Dorsolateral prefrontal cortex (tissue), 120 donors: ENCODE measurements at regions of chr1 and their contacts with region 1.

Region 1: DNA sequence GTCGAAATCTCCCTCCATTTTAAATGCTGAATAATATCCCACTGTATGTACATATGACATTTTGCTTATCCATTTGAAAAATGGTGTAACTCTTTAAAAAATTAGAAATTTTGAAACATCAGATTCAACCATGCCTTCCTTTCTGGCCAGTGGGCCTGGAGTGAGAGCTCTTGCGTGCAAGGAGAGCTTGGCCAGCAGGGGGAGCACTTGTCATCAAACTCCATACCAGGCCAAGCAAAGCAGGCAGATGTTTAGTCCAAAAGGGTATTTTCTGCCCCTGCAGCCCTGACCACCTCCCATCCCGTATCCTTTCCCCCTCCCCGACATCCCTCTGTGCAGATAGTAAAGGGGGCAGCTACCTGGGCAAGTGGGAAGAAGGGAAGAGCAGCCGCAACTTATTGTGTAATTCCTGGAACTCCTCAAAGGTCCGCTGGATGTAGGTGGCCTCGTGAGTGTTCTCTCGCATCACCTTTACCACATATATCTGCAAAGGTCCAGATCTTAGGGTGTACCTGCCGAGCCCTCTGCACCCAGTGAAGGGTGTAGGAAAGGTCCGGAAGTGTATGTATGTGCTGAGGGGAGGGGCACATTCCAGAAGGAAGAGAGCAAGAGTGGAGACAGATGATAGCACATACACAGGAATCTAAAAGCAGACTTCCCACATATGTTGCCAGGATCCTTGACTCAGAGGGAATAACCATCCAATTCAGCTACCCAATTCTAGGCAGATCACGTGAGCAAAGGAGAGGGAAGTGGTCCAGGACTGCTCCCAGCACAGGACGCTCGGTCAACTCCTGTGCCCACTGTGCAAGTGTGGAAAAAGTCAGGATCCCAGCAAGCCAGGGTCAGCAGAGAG is 19.9 kb upstream of the PPP1R15B start:
- DNase-seq: peak; percentile 76 to 88 (median 82)
- H3K4me3 ChIP-seq: no peak overlapping the region
- H3K27ac ChIP-seq: peak overlapping the region in 48 of 59 donors; percentile 2 to 79 (median 52)
- H3K27me3 ChIP-seq: no peaks in the 10 kb centered on the region
- CTCF ChIP-seq: peak; percentile 75 to 96 (median 92)

Region 2: DNA sequence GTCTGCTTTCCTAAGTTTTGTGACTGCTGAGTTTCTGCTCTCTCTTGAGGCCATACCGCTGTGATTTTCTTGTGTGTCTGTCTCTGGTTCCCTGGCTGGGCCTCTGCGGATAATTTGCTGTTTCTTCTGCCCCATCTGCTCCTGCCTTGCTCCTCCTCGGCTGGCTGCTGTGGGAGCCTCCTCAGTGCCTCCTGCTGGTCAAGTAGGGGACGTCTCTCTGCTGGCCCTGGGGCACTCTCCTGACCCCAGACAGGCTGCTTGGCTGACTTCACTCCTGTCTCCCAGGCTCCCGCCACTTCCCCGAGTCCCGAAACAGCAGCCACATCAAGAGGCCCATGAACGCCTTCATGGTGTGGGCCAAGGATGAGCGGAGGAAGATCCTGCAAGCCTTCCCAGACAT is 308.2 kb before region 1 on chr1:
- intact Hi-C with region 1: no loop called
- DNase-seq: no peak
- H3K4me3 ChIP-seq: no peak overlapping the region
- H3K27ac ChIP-seq: no peak overlapping the region
- H3K27me3 ChIP-seq: no peaks in the 10 kb centered on the region
- CTCF ChIP-seq: peak in 27 of 56 donors; percentile 13 to 40 (median 24)

Region 3: DNA sequence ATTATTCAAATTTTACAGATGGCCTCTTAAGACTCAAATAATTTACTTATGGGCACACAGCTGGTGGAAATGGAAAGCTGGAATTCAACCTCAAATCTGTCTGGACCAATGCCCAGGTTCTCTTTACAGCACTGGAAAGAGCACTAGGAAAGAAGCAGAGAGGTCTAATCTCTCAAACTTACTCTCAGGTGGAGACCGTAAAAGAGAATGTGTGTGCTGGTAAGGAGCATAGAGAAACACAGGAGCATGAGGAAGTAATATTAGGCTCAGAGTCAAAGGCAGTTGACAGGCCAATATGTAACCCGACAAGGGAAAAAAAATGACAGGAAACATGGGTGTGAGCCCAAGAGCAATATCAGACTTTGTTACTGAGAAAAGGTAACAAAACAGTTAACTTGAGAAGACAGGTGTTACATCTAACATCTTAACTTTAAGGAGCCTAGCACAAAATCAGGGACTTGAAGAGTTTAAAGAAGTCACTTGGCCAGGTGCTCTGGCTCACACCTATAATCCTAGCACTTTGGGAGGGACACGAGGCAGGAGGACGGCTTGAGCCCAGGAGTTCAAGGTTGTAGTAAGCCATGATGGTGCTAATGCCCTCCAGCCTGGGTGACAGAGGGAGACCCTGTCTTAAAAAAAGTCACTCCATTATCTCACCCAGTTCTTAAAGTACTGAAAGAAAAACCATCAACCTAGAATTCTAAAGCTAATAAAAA is 40.6 kb before region 1 on chr1:
- intact Hi-C with region 1: no loop called
- DNase-seq: no peak
- H3K4me3 ChIP-seq: no peak overlapping the region
- H3K27ac ChIP-seq: no peak overlapping the region
- H3K27me3 ChIP-seq: no peaks in the 10 kb centered on the region
- CTCF ChIP-seq: no peak

Region 4: GRCh38 chr1:204506961-204507387 is 75.4 kb after region 1 on chr1:
- intact Hi-C with region 1: loop called in 1 of 2 experiments (anchors 2 kb)
- DNase-seq: peak in 8 of 10 donors; percentile 66 to 87 (median 79)
- H3K4me3 ChIP-seq: peak overlapping the region; percentile 51 to 96 (median 73)
- H3K27ac ChIP-seq: peak overlapping the region; percentile 66 to 100 (median 96)
- H3K27me3 ChIP-seq: no peaks in the 10 kb centered on the region
- CTCF ChIP-seq: peak in 5 of 56 donors; percentile 6 to 24 (median 13)

Region 5: DNA sequence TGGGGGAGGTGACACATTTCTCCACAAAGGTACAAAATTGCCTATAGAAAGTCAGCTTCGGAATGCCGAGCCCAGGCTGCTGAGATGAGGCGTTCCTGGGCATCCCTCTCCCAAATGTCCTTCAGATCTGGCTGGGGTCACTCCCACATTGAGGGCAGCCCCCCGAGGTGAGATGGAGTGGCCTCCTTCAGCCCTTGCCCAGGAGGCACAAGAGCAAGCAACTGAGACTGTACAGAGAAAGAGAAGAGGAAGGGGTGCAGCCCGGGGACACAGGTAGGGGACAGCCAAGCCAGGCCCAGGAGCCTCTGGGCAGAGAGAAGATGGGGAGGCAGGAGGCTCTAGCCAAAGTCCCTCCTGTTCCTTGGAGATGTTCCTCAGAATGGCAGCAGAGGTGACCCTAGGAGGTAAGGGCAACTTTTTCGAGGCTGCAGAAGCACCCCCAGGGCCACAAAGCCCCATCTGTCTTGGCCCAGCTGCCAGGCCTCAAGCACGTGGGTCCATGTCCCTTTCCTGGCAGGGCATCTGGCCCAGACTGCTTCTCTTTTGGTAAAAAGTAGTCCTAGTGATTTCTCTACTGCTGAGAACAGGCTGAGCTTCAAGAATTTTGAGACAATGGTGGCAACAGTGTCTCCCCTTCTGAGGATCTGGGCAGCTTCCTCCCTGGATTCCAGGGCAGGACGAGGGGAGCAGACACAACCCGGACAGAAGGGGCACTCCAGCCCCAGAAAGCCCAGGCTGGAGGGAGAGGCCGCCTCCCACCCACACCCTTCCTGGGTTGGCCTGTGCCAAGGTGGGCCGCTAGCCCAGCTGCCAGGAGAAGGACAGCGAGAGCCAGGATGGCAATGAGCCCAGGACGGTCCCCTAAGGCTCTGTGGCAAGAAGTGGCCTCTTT is 186.0 kb after region 1 on chr1:
- intact Hi-C with region 1: no loop called
- DNase-seq: peak in 4 of 10 donors; percentile 38 to 71 (median 56)
- H3K4me3 ChIP-seq: no peak overlapping the region
- H3K27ac ChIP-seq: peak overlapping the region in 11 of 59 donors; percentile 1 to 73 (median 22)
- H3K27me3 ChIP-seq: no peaks in the 10 kb centered on the region
- CTCF ChIP-seq: no peak

Region 6: DNA sequence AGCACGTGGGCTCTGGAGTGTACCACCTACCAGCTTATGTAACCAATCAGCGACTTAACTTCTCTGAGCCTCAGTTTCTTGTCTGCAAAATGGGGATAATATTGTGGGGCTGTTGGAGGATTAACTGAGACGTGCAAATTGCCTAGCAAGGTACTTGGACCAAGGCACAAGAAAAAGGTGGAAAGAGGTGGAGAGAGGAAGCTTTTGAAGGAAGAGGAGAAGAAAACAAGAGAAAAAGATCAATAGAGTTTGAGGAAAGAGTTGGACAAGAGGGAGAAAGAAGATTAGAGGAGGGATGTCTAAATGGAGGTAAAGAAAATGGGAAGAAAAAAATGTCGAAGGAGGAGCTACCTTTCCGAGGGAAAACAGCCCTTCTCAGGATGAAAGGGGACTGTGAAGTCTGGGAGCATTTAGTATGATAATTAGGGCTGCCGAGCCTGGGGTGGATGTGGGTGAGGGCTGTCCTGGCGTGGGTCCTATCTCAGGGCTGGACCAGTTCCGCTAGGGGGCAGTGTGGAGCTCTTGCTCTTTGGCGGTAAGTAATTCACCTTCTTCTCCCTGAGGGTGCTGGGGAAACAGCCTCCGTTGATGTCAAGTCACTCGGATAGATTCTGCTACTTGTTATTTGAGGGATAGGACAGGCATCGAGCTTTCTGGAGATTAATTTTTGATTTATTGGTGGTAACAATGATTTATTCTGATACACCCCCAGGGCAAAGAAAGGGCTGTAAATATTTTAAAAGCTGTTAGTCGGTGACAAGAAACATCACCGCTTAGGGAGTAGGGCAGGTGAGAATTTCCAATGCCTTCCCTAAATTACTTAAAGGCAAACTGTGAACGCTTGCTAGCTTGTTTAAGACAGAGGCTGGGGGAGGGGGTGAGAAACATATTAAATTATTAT is 360.2 kb after region 1 on chr1:
- intact Hi-C with region 1: loop called in 1 of 2 experiments (anchors 10 kb)
- DNase-seq: peak; percentile 38 to 62 (median 56)
- H3K4me3 ChIP-seq: no peak overlapping the region
- H3K27ac ChIP-seq: no peak overlapping the region
- H3K27me3 ChIP-seq: peaks cover 0 to 16% (median 0%) of the 10 kb centered on the region in 45 donors
- CTCF ChIP-seq: peak; percentile 22 to 87 (median 77)